ENCODE measurements at regions of chr14 and their contacts with region 1.

Region 1: GRCh38 chr14:53924754-53925153 is 31.9 kb downstream of the BMP4 start:
- DNase-seq: no peak
- H3K4me3 Mint-ChIP-seq: no peak overlapping the region
- H3K27ac Mint-ChIP-seq: no peak overlapping the region
- H3K4me1 Mint-ChIP-seq: peaks cover 51% of the 10 kb centered on the region
- H3K27me3 Mint-ChIP-seq: no peaks in the 10 kb centered on the region
- CTCF ChIP-seq: no peak

Region 2: GRCh38 chr14:53696217-53696965 is 228.4 kb before region 1 on chr14:
- CTCF ChIA-PET with region 1: no interaction called
- intact Hi-C with region 1: no loop called
- DNase-seq: no peak
- H3K4me3 Mint-ChIP-seq: no peak overlapping the region
- H3K27ac Mint-ChIP-seq: no peak overlapping the region
- H3K4me1 Mint-ChIP-seq: peaks cover 9% of the 10 kb centered on the region
- H3K27me3 Mint-ChIP-seq: no peaks in the 10 kb centered on the region
- CTCF ChIP-seq: no peak

Region 3: DNA sequence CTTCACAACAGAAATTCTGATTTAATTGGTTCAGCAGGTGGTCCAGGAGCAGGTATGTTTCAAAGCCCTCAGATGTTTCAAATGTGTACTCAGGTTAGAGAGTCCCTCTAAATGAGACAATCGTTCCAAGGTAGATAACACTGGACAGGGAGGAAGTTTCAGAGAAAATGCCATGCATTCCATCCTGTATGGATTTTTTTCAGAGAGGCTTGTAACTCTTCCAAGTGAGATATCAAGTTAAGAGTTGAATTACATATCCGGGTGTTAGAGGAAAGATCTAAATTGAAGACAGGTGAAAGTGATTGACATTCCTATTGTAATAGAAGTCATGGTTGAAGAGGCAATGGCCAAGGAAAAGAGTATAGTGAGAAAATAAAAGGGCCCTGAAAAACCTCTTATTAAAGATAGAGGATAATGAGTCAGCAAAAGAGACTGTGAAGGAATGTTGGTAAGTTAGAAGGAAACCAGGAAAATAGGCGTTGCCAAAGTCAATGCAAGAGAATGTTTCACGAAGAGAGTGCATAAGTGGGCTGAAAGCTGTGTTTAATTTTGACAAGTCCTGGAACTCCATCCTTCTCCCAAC is 73.9 kb before region 1 on chr14:
- CTCF ChIA-PET with region 1: no interaction called
- intact Hi-C with region 1: loop called (anchors 5 kb)
- DNase-seq: no peak
- H3K4me3 Mint-ChIP-seq: peak overlapping the region; percentile 67
- H3K27ac Mint-ChIP-seq: peak overlapping the region; percentile 96
- H3K4me1 Mint-ChIP-seq: peaks cover 62% of the 10 kb centered on the region
- H3K27me3 Mint-ChIP-seq: no peaks in the 10 kb centered on the region
- CTCF ChIP-seq: no peak

Region 4: GRCh38 chr14:54241517-54241916 is 316.8 kb after region 1 on chr14:
- CTCF ChIA-PET with region 1: no interaction called
- intact Hi-C with region 1: no loop called
- DNase-seq: no peak
- H3K4me3 Mint-ChIP-seq: no peak overlapping the region
- H3K27ac Mint-ChIP-seq: no peak overlapping the region
- H3K4me1 Mint-ChIP-seq: no peaks in the 10 kb centered on the region
- H3K27me3 Mint-ChIP-seq: no peaks in the 10 kb centered on the region
- CTCF ChIP-seq: no peak

Region 5: DNA sequence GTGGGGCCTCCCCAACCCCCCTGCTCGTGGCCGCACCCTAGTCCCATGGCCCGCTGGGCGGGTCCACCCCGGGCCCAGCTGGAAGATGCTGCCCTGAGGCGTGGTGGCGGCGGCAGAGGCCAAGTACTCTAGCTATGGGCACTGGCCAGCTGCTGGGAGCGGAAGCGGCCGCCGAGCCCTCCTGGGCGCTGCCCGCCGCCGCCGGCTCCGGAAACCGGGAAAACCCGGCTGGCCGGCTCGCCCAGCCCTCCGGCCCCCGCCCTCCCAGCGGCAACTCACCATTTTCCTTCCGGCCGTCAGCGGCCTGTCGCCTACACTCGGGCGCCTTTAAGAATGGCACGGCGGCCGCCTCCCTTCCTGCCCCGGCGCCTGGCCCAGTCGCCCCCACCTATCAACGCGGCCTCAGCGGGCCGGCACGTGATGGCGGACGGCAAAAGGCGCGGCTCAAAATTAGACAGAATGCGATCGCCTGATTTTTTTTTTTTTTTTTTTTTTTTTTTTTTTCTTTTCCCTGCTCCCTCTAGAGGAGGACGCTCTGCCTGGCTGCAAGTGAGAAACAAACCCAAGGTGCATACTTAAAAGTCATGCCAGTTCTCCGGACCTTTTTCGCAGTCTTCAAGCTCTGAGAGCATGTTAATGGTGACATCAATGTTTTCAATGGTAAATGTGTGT is 564.0 kb after region 1 on chr14 and contains the start of gene GMFB:
- CTCF ChIA-PET with region 1: no interaction called
- intact Hi-C with region 1: no loop called
- DNase-seq: peak; percentile 91
- H3K4me3 Mint-ChIP-seq: peak within 1 kb of the TSS; percentile 79
- H3K27ac Mint-ChIP-seq: peak within 1 kb of the TSS; percentile 97
- H3K4me1 Mint-ChIP-seq: peaks cover 33% of the 10 kb centered on the region
- H3K27me3 Mint-ChIP-seq: no peaks in the 10 kb centered on the region
- CTCF ChIP-seq: no peak
- total RNA-seq, gene GMFB: 39.2 and 43.0 TPM in 2 replicates

Measured in Calu3 (cell line).